ENCODE measurements at regions of chr2 and their contacts with region 1.

Region 1: GRCh38 chr2:37832590-37833197 is 92.4 kb upstream of the RMDN2 start:
- DNase-seq: peak; percentile 82 to 91 (median 88)
- ATAC-seq: peak; percentile 62 to 87 (median 80)
- H3K4me3 ChIP-seq: no peak overlapping the region
- H3K27ac ChIP-seq: peak overlapping the region in 5 of 12 donors; percentile 32 to 86 (median 79)
- H3K4me1 ChIP-seq: peaks cover 0 to 45% (median 31%) of the 10 kb centered on the region in 12 donors
- H3K27me3 ChIP-seq: no peaks in the 10 kb centered on the region
- CTCF ChIP-seq: peak; percentile 60 to 84 (median 77)
- POLR2A ChIP-seq: no peak

Region 2: DNA sequence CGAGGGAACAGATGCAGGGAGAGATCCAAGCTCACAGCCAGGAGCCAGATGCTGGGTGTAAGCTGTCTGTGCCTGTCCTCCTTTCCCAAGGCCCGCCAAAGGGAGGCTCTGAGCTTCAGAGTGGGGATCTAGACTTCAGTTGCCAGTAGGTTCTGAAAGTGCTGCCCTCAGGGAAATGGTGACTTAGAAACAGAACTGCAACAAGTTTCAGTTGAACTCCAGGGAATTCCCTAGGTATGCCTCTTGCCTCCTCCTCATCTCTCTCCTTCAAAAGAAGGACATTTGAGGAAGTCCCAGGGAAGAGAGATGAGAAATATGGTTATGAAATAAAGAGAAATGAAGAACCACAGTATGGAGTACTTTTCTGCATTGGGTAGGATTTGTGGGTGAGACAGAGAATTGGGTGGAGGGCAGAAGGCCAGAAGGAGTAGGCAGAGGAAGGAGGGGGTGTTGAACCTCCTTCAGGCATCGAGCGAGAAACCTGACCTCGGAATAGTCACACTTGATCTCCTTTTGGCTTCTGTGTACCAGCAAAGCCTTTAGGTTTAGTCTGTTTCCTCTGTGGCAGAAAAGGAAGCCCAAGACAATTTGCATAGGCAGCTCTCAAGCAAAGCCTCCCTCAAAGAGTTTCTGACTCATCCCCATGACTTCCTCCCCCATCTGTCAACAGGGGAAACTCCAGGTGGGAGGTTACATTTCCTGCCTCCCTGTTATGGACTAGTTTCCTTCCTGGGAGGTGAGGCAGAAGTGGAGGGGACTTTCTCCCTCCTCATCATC is 442.5 kb before region 1 on chr2:
- intact Hi-C with region 1: loop called in 7 of 10 experiments (anchors 5 kb)
- DNase-seq: peak in 3 of 5 donors; percentile 30 to 34 (median 31)
- ATAC-seq: peak in 3 of 4 donors; percentile 67 to 93 (median 74)
- H3K4me3 ChIP-seq: no peak overlapping the region
- H3K27ac ChIP-seq: peak overlapping the region in 8 of 12 donors; percentile 26 to 87 (median 54)
- H3K4me1 ChIP-seq: peaks cover 0 to 46% (median 9%) of the 10 kb centered on the region in 12 donors
- H3K27me3 ChIP-seq: no peaks in the 10 kb centered on the region
- CTCF ChIP-seq: no peak
- POLR2A ChIP-seq: no peak

Region 3: GRCh38 chr2:37397166-37397565 is 435.5 kb before region 1 on chr2:
- intact Hi-C with region 1: loop called in 9 of 10 experiments (anchors 2 to 5 kb)
- DNase-seq: no peak
- ATAC-seq: no peak
- H3K4me3 ChIP-seq: no peak overlapping the region
- H3K27ac ChIP-seq: no peak overlapping the region
- H3K4me1 ChIP-seq: peaks cover 0 to 27% (median 0%) of the 10 kb centered on the region in 12 donors
- H3K27me3 ChIP-seq: no peaks in the 10 kb centered on the region
- CTCF ChIP-seq: no peak
- POLR2A ChIP-seq: no peak

Region 4: DNA sequence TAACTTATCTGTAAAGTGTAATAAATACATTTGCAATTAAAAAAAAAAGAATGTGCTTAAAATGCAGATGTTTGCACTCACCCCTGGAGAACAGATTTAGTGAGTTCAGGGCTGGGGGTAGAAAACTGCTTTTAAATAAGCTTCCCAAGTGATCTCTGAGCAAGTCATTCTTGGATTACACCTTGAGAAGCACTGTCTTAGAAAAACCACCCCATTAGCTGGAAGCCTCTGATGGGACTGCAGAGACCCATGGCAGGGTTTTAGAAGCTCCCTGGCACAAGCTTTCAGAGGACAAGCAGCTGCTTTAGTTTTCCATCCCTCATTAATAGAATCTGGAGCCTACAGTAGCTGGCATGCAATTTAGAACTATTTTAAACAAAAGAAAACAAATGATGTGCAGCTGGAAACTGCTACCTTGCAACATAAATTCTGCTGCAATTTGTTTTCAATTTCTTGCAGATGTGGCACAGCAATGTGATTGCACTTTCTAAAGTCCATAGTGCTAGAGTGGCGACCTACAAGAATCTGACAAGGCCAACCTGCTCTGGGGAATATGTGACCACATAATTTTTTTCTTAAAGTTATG is 302.8 kb before region 1 on chr2:
- intact Hi-C with region 1: loop called in 2 of 10 experiments (anchors 5 to 10 kb)
- DNase-seq: no peak
- ATAC-seq: no peak
- H3K4me3 ChIP-seq: no peak overlapping the region
- H3K27ac ChIP-seq: no peak overlapping the region
- H3K4me1 ChIP-seq: peaks cover 0 to 12% (median 2%) of the 10 kb centered on the region in 12 donors
- H3K27me3 ChIP-seq: no peaks in the 10 kb centered on the region
- CTCF ChIP-seq: no peak
- POLR2A ChIP-seq: no peak

Region 5: GRCh38 chr2:37549598-37549997 is 283.1 kb before region 1 on chr2:
- intact Hi-C with region 1: loop called in 1 of 10 experiments (anchors 2 kb)
- DNase-seq: no peak
- ATAC-seq: no peak
- H3K4me3 ChIP-seq: no peak overlapping the region
- H3K27ac ChIP-seq: no peak overlapping the region
- H3K4me1 ChIP-seq: peaks cover 0 to 9% (median 0%) of the 10 kb centered on the region in 12 donors
- H3K27me3 ChIP-seq: no peaks in the 10 kb centered on the region
- CTCF ChIP-seq: no peak
- POLR2A ChIP-seq: no peak

Region 6: GRCh38 chr2:37653805-37654378 is 178.8 kb before region 1 on chr2:
- intact Hi-C with region 1: loop called in 3 of 10 experiments (anchors 1 to 10 kb)
- DNase-seq: peak; percentile 70 to 89 (median 79)
- ATAC-seq: peak; percentile 74 to 87 (median 79)
- H3K4me3 ChIP-seq: peak overlapping the region in 9 of 12 donors; percentile 1 to 38 (median 19)
- H3K27ac ChIP-seq: peak overlapping the region; percentile 76 to 95 (median 90)
- H3K4me1 ChIP-seq: peaks cover 28 to 98% (median 90%) of the 10 kb centered on the region in 12 donors
- H3K27me3 ChIP-seq: no peaks in the 10 kb centered on the region
- CTCF ChIP-seq: no peak
- POLR2A ChIP-seq: peak in 1 of 2 donors; percentile 34

Measured in heart left ventricle (tissue), 16 donors.